BJ (cell line): ENCODE measurements at regions of chr6 and their contacts with region 1.

Region 1: DNA sequence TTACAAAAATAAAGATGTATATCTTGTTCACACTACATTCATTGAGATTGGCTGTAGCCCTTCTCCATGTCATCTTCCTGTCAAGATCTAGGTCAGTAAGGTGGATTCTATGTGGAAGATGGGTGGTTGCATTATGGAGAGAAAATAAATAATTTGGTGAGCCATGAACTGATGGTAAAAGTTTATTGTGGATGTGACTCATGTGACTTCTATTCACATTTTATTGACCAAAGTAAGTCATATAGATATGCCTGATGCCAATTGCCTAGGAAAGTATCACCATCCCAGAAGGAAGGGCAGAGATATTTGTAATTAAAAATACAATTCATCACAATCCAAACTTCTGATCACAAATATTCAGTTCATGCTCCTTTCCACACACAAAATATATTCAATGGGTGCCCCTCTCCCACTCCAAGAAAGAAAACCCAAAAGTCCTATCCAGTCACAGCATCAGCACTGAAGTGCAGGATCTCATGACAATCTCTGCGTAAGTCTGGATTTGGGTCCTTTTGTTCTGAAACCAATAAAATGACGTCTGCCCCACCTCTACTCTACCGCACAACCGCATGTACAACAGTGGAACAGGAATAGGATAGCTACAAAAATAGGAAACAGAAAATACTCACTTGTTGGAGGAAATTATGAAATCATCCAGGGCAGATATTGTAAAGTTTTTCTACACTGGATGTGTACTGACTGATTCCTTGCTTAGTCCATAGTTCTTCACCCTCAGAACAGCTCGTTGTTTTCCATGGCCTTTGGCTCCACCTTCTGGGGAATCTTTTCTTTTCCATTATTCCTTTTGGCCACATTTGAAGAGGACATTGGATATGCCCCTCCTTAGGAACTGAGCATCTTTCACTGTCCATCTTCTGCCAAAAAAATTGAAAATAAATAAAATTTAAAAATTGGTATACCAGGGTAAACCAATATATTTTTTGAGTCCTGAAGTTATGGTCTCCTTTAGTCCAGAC is 16.1 kb upstream of the SLC17A3 start:
- DNase-seq: no peak
- H3K4me3 ChIP-seq: no peak overlapping the region
- H3K27me3 ChIP-seq: no peaks in the 10 kb centered on the region; the same call in 1 of the 2 replicates
- CTCF ChIP-seq: peak; percentile 49

Region 2: GRCh38 chr6:25717866-25718740 is 172.1 kb before region 1 on chr6:
- CTCF ChIA-PET with region 1: interaction called, 11 read pairs
- POLR2A ChIA-PET with region 1: no interaction called
- DNase-seq: no peak
- H3K4me3 ChIP-seq: no peak overlapping the region
- H3K27me3 ChIP-seq: no peaks in the 10 kb centered on the region
- CTCF ChIP-seq: peak; percentile 59

Region 3: GRCh38 chr6:25788305-25788922 is 101.8 kb before region 1 on chr6:
- CTCF ChIA-PET with region 1: interaction called, 31 read pairs
- POLR2A ChIA-PET with region 1: no interaction called
- DNase-seq: peak; percentile 1
- H3K4me3 ChIP-seq: no peak overlapping the region
- H3K27me3 ChIP-seq: no peaks in the 10 kb centered on the region
- CTCF ChIP-seq: peak; percentile 68

Region 4: GRCh38 chr6:25874822-25875562 is 15.2 kb before region 1 on chr6:
- CTCF ChIA-PET with region 1: no interaction called
- POLR2A ChIA-PET with region 1: no interaction called
- DNase-seq: no peak
- H3K4me3 ChIP-seq: no peak overlapping the region
- H3K27me3 ChIP-seq: no peaks in the 10 kb centered on the region
- CTCF ChIP-seq: no peak